WTC11 (cell line): ENCODE measurements at regions of chr20 and their contacts with region 1.

Region 1: DNA sequence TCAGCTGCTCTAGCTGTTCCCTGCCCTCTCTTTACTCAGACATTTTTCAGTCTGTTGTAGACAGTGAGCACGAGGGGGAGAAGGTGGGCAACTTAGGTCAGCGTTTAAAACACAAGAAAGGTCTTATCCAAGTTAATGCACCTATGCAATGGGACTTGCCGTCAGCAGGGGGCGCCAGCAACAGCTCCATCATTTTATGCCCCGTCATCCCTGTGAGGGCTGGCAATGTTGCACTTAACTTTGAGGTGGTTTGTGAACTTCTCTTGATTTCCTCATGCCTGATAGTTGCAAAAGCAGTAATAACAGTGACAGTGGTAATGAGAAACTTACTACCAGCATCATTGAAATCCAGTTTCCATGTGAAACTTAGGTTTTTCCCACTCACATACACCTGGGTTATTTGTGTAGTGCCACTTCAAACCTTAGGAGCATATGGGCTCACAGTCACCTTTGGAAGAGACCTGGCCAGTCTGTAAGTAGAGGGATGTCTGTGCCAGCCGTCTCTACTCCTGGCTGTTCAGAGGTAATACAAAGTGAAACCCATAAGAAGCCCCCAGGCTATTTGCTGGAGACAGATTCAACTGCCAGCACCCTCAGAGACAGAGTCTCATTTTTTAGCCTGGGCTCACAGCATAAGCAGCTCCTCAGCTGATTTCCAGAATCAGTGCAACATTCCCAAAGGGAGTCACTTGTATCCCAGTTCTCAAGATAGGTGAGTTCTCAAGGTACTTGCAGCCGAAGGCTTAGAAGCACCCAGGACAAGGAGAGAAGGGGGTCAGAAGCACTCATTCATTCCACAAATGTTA is 44.8 kb upstream of the ID1 start:
- DNase-seq: peak; percentile 77
- ATAC-seq: peak; percentile 52
- H3K4me3 Mint-ChIP-seq: no peak overlapping the region
- H3K27ac Mint-ChIP-seq: peak overlapping the region; percentile 93
- H3K4me1 Mint-ChIP-seq: peaks cover 10% of the 10 kb centered on the region
- H3K27me3 Mint-ChIP-seq: no peaks in the 10 kb centered on the region
- CTCF ChIP-seq: peak; percentile 91

Region 2: GRCh38 chr20:31494131-31494530 is 66.2 kb before region 1 on chr20:
- CTCF ChIA-PET with region 1: no interaction called
- POLR2A ChIA-PET with region 1: no interaction called
- DNase-seq: peak; percentile 68
- ATAC-seq: peak; percentile 86
- H3K4me3 Mint-ChIP-seq: no peak overlapping the region
- H3K27ac Mint-ChIP-seq: no peak overlapping the region
- H3K4me1 Mint-ChIP-seq: no peaks in the 10 kb centered on the region
- H3K27me3 Mint-ChIP-seq: peaks cover 21% of the 10 kb centered on the region
- CTCF ChIP-seq: peak; percentile 30; the same call in 1 of the 2 replicates

Region 3: GRCh38 chr20:31522731-31523130 is 37.6 kb before region 1 on chr20:
- CTCF ChIA-PET with region 1: interaction called, 15 read pairs
- POLR2A ChIA-PET with region 1: interaction called, 3 read pairs
- DNase-seq: no peak
- ATAC-seq: no peak
- H3K4me3 Mint-ChIP-seq: no peak overlapping the region
- H3K27ac Mint-ChIP-seq: no peak overlapping the region
- H3K4me1 Mint-ChIP-seq: no peaks in the 10 kb centered on the region
- H3K27me3 Mint-ChIP-seq: no peaks in the 10 kb centered on the region
- CTCF ChIP-seq: no peak

Region 4: DNA sequence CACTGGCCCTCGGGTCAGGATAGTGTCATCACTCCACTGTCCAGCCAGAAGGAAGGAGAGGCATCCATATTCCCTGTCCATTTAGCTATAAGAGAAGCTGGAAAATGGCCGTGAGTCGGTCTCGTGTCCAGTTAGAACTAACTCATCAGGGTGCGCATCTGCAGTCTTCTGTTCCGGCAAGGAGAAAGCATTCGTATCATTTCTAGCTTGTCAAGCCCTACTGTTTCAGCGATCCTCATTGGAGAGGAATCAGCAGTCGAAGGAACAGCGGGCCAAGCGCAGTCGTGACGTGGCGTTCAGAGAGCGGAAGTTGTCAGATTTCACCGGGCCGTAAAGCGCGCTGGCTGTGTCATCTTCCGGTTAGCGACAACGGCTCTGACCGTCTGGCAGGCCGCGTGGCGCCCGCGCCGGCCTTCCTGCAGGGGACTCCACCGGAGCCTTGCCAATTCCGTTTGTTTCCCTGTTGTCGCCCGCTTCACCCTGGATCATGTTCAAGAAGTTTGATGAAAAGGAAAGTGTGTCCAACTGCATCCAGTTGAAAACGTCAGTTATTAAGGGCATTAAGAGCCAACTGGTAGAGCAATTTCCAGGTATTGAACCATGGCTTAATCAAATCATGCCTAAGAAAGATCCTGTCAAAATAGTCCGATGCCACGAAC is 13.2 kb before region 1 on chr20:
- CTCF ChIA-PET with region 1: interaction called, 36 read pairs
- POLR2A ChIA-PET with region 1: no interaction called
- DNase-seq: peak; percentile 73
- ATAC-seq: peak; percentile 65
- H3K4me3 Mint-ChIP-seq: peak overlapping the region; percentile 91
- H3K27ac Mint-ChIP-seq: peak overlapping the region; percentile 99
- H3K4me1 Mint-ChIP-seq: 0 out of 2 replicates have a peak, but pooled peaks cover 4% of the 10 kb centered on the region
- H3K27me3 Mint-ChIP-seq: no peaks in the 10 kb centered on the region
- CTCF ChIP-seq: no peak

Region 5: DNA sequence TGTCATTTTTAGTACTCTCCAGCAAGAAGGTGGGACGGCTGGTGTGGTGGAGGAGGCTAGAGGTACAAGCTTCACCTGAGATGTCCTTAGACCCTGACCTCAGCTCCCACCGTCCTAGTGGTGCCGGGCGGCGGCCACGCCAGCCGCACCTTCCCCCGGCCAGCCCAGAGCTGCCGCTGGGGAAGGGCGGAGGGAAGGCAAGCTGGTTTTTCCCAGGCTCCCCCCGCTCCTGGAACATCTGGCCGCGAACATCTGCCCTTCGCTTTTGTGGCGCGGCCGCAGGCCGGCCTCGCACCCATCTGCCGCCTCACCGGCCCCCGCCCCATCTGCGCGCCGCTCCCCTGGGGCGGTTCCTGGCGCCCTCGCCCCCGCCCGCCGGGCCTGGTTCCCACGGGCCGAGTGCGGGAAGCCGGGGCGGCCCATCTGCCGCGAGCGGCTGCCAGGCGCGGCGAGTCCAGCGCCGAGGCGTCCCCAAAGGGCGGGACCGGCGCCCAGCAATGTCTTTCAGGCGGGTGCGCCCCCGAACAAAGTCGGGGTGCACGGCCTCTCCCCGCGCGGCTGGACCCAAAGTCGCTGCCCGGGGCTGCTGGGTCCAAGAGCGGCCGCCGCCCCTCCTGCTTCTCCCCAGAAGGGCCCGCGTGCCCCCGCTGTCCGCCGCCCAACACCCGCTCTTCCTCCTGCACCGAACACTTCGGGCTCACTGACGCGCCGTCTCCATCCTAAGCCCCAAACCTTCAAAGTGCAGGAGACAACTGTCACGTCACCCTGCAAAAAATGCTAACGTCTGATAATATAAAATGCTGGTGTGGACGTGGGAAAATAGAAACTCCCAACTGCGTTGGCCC is 27.5 kb after region 1 on chr20:
- CTCF ChIA-PET with region 1: interaction called, 28 read pairs
- POLR2A ChIA-PET with region 1: no interaction called
- DNase-seq: no peak
- ATAC-seq: peak; percentile 27
- H3K4me3 Mint-ChIP-seq: peak overlapping the region; percentile 76
- H3K27ac Mint-ChIP-seq: peak overlapping the region; percentile 50
- H3K4me1 Mint-ChIP-seq: peaks cover 56% of the 10 kb centered on the region
- H3K27me3 Mint-ChIP-seq: peaks cover 14% of the 10 kb centered on the region
- CTCF ChIP-seq: no peak

Region 6: DNA sequence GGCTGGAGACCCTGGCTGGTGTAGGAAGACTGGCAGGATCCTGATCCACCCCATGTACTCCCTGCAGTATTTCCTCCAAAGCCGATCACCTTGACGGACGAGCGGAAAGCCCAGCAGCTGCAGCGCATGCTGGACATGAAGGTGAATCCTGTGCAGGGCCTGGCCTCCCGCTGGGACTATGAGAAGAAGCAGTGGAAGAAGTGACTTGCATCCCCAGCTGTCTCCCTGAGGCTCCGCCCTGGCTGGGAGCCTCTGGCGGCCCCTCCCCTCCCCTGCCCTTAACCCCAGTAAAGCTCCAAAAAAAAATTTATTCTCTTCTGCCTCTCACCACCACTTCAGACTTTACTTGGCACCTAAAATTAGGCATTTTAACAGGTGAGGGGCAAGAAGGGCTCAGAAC is 84.4 kb after region 1 on chr20:
- CTCF ChIA-PET with region 1: interaction called, 12 read pairs
- POLR2A ChIA-PET with region 1: no interaction called
- DNase-seq: no peak
- ATAC-seq: no peak
- H3K4me3 Mint-ChIP-seq: no peak overlapping the region
- H3K27ac Mint-ChIP-seq: no peak overlapping the region
- H3K4me1 Mint-ChIP-seq: no peaks in the 10 kb centered on the region
- H3K27me3 Mint-ChIP-seq: no peaks in the 10 kb centered on the region; the same call in 1 of the 2 replicates
- CTCF ChIP-seq: no peak